Sciatic nerve (tissue), 2 donors: ENCODE measurements at regions of chr1 and their contacts with region 1.

Region 1: GRCh38 chr1:89454845-89455521 is 69.6 kb upstream of the LRRC8B start:
- DNase-seq: peak; percentile 61
- ATAC-seq: peak; percentile 78

Region 2: DNA sequence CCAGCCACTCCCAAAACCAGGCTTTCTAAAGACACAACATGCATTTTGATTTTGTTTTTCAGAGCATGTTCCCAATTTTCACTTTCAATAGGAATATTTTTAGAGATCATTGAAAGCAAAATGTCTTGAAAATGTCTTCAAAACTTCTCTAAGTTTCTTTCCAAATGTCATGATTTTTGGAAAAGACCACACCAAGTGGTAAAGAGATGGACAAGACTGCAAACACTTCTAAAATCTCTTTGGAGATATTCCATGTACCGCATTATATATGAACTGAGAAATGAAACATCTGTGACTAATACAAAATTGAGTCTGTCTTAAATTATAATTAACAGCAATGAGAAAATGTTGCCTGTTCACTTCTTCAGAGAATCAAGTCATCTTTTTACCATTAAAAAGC is 1188.9 kb before region 1 on chr1:
- intact Hi-C with region 1: loop called (anchors 5 kb)
- DNase-seq: no peak
- ATAC-seq: no peak

Region 3: DNA sequence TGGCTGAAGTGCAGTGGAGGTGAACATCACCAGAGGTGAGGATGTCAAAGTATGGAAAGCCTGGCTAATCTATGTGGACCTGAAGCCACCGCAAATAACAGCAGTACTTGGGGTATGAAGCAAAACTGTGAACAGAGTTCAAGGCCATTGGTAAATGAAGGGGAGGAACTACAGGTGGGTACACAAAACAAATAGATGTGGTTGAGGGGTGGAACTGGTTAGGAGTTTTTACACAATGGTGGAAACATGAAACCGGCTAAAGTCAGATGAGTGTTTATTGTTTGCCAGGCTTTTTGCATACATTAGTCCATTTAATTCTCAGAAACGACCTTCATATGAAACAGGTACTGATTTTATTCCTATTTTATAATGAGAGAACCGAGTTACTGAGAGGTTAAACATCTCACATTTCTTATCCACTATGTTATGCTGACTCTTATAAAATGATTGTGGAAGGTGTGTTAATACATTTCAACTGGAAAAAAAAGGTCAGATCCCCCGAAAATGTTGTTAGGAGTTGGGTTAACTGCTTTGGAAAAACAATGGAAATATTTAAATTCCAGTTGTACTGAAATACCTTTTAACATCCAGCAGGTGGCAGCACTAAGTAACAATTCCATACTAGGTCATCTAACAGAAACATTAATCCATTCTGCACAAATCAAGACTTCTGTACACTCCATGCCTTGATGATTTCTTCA is 519.3 kb before region 1 on chr1:
- intact Hi-C with region 1: loop called (anchors 5 kb)
- DNase-seq: no peak
- ATAC-seq: no peak